GM12878 (cell line): ENCODE measurements at regions of chrX and their contacts with region 1.

Region 1: DNA sequence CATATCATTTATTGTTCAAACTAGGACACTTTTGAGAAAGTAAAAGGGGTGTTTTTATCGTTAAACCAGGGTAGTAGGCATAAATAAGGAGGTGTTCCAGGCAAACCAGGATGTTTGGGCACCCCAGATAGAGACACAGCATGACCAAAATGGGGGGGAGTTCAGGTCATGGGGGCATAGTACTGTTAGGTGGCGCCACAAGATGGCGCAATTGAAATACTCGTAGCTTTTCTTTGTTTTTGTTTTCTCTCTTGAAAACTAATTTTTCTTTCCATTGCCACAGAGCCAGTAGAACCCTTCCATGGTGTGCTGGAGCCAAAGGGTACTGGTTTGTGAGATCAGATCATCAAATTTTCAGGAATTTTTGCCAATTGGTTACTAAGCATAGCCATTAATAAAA is 283.4 kb downstream of the BCOR start:
- DNase-seq: no peak
- ATAC-seq: peak; percentile 62
- H3K4me3 ChIP-seq: no peak overlapping the region
- H3K27ac ChIP-seq: no peak overlapping the region
- H3K4me1 ChIP-seq: peaks cover 18% of the 10 kb centered on the region
- H3K27me3 ChIP-seq: no peaks in the 10 kb centered on the region; a peak in 2 of 4 replicates
- CTCF ChIP-seq: peak; percentile 47 to 64 (median 58); a peak in 5 of 6 replicates
- EP300 ChIP-seq: no peak
- POLR2A ChIP-seq: no peak
- RAD21 ChIP-seq: peak; percentile 65

Region 2: DNA sequence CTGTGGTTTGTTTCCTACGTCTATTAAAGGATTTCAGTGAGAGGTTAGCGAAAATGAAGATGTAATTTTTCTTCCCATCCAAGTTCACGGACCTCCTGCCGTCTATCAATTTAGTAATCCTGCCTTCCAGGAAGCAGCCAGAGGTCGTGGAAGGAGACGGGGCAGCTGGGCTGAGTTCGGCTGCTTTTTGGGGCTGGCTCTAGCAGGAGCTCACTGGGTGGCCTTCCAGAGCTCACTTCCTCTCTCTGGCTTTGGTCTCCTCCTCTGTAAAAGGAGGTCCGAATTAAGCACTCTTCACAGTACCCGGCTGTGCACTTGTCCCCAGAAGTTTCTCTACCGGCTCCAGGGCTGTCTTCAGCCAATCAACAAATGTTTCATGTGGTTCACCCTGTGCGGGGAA is 12.0 kb before region 1 on chrX:
- CTCF ChIA-PET with region 1: no interaction called
- POLR2A ChIA-PET with region 1: no interaction called
- RAD21 ChIA-PET with region 1: no interaction called
- SMC1A ChIA-PET with region 1: no interaction called
- in situ Hi-C with region 1: no loop called
- intact Hi-C with region 1: no loop called
- DNase-seq: no peak
- ATAC-seq: no peak
- H3K4me3 ChIP-seq: no peak overlapping the region
- H3K27ac ChIP-seq: no peak overlapping the region
- H3K4me1 ChIP-seq: no peaks in the 10 kb centered on the region
- H3K27me3 ChIP-seq: no peaks in the 10 kb centered on the region; a peak in 2 of 4 replicates
- CTCF ChIP-seq: no peak
- EP300 ChIP-seq: no peak
- POLR2A ChIP-seq: no peak
- RAD21 ChIP-seq: no peak

Region 3: DNA sequence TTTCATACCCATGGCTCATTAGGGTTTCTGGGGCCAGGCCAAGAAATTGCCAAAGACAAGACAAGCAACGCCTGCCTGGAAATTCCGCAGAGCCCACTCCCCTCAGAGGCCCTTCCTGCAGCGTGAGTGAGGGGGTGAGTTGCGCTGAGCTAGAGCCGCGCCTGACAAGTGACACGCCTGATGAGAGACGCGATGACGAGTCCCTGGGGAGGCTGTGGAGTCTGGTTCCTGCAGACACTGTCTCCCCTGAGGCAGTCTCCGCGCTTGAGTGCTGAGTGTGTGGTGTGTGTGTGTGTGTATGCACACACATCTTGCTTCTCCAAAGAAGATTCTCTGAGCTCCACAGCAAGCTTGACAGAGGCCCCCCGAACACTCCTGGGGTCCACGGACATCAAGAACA is 13.6 kb after region 1 on chrX:
- CTCF ChIA-PET with region 1: interaction called, 8 read pairs
- POLR2A ChIA-PET with region 1: interaction called, 4 read pairs
- RAD21 ChIA-PET with region 1: interaction called, 13 read pairs
- SMC1A ChIA-PET with region 1: interaction called, 7 read pairs
- in situ Hi-C with region 1: no loop called
- intact Hi-C with region 1: no loop called
- DNase-seq: no peak
- ATAC-seq: peak; percentile 90
- H3K4me3 ChIP-seq: no peak overlapping the region
- H3K27ac ChIP-seq: no peak overlapping the region
- H3K4me1 ChIP-seq: no peaks in the 10 kb centered on the region; the same call in 1 of the 2 replicates
- H3K27me3 ChIP-seq: no peaks in the 10 kb centered on the region
- CTCF ChIP-seq: no peak
- EP300 ChIP-seq: no peak
- POLR2A ChIP-seq: no peak
- RAD21 ChIP-seq: no peak

Region 4: DNA sequence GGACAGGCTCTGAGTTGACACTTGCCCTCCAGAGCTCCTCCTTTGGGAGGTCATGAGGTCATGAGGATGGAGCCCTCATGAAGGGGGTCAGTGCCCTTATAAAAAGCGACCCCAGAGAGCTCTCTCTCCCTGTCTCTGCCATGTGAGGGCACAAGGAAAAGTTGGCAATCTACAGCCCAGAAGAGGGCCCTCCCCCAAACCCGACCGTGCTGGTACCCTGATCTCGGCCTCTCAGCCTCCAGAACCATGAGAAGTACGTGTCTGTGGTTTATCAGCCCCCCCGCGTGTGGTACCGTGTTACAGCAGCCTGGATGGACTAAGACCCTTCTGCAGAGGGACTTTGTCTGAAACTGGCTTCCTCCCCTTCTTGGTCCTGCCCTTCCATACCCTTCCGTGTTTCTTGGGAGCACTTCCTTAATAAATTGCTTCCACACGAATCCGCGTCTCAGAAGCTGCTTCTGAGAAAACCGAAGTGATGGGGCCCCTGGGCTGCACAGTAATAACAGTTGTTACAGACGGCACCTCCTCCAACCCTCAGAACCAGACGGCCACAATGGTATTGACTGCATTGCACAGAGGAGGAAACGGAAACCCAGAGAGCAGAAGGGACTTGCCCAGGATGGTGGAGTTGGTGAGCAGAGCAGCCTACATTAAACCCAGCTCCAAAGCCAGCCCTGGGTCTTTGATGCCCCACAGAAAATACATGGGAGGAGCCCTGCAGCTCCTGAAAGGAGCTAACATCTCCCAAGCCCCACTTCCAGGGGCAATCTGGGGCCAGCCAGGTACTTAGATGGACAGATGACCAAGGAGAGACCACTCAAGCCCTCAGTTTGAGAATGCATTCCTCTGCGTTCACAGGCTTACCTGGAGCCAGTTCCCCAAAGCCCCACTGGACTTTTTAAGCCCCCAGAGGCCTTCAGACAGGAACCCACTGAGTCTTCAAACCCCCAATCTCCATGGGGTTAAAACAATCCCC is 40.7 kb after region 1 on chrX:
- CTCF ChIA-PET with region 1: interaction called, 33 read pairs
- POLR2A ChIA-PET with region 1: interaction called, 9 read pairs
- RAD21 ChIA-PET with region 1: interaction called, 25 read pairs
- SMC1A ChIA-PET with region 1: interaction called, 49 read pairs
- in situ Hi-C with region 1: no loop called
- intact Hi-C with region 1: loop called (anchors 2 kb)
- DNase-seq: peak; percentile 82
- ATAC-seq: peak; percentile 88
- H3K4me3 ChIP-seq: peak overlapping the region; percentile 68
- H3K27ac ChIP-seq: peak overlapping the region; percentile 96
- H3K4me1 ChIP-seq: peaks cover 57% of the 10 kb centered on the region
- H3K27me3 ChIP-seq: no peaks in the 10 kb centered on the region
- CTCF ChIP-seq: peak in 2 of 3 experiments; percentile 25 to 27; a peak in 2 of 6 replicates
- EP300 ChIP-seq: peak in 1 of 2 experiments; percentile 44; a peak in 1 of 4 replicates
- POLR2A ChIP-seq: peak; percentile 82
- RAD21 ChIP-seq: peak; percentile 35

Region 5: DNA sequence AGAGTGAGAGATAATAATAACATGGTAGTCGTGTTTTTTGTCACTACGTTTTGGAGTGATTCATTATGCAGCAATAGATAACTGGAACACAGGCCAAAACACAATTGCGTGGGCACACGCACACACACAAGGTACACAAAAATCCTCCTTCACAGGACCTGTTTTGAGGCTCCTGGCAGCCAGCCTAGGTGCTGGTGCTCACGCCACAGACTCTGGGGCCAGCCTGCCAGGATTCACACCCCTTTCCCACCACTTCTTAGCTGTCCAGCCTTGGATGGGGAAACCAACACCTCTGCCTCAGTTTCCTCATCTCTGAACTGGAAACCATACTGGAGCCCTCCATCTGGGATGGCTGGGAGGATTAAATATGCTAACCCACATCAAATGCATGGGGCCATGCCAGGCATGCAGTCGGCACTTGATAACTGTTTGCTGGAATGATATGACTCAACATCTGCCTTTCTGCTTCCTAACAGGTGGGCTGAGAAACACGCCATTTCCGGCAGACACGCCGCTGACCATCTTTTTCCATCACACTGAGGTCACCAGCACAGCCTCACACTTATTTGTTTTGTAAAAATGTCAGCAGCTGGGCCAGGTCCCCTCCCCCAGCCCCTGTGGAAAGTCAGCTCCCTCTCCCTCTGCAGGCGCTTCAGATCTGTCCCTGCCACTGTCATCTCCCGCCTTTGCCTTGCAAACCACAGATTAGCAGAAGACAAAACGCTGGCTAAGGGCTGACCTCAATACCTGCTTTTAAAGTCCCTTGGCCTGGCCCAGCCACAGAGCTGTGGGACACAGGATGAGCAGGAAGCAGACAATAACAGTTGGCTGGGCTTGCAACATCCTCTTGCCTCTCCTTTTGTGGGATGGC is 45.8 kb after region 1 on chrX:
- CTCF ChIA-PET with region 1: interaction called, 33 read pairs
- POLR2A ChIA-PET with region 1: interaction called, 9 read pairs
- RAD21 ChIA-PET with region 1: interaction called, 17 read pairs
- SMC1A ChIA-PET with region 1: interaction called, 49 read pairs
- in situ Hi-C with region 1: no loop called
- intact Hi-C with region 1: loop called (anchors 2 kb)
- DNase-seq: peak; percentile 89
- ATAC-seq: peak; percentile 72
- H3K4me3 ChIP-seq: no peak overlapping the region
- H3K27ac ChIP-seq: peak overlapping the region; percentile 55
- H3K4me1 ChIP-seq: peaks cover 48% of the 10 kb centered on the region
- H3K27me3 ChIP-seq: no peaks in the 10 kb centered on the region
- CTCF ChIP-seq: no peak
- EP300 ChIP-seq: peak; percentile 91 to 98
- POLR2A ChIP-seq: no peak
- RAD21 ChIP-seq: no peak

Region 6: GRCh38 chrX:40013266-40014195 is 199.1 kb after region 1 on chrX:
- CTCF ChIA-PET with region 1: no interaction called
- POLR2A ChIA-PET with region 1: no interaction called
- RAD21 ChIA-PET with region 1: interaction called, 4 read pairs
- SMC1A ChIA-PET with region 1: no interaction called
- in situ Hi-C with region 1: no loop called
- intact Hi-C with region 1: loop called (anchors 10 kb)
- DNase-seq: no peak
- ATAC-seq: peak; percentile 69
- H3K4me3 ChIP-seq: peak overlapping the region; percentile 57; the same call in 1 of the 2 replicates
- H3K27ac ChIP-seq: peak overlapping the region; percentile 42
- H3K4me1 ChIP-seq: peaks cover 5% of the 10 kb centered on the region; the same call in 1 of the 2 replicates
- H3K27me3 ChIP-seq: no peaks in the 10 kb centered on the region
- CTCF ChIP-seq: no peak
- EP300 ChIP-seq: no peak
- POLR2A ChIP-seq: peak; percentile 50; the same call in 1 of the 2 replicates
- RAD21 ChIP-seq: no peak

Region 7: DNA sequence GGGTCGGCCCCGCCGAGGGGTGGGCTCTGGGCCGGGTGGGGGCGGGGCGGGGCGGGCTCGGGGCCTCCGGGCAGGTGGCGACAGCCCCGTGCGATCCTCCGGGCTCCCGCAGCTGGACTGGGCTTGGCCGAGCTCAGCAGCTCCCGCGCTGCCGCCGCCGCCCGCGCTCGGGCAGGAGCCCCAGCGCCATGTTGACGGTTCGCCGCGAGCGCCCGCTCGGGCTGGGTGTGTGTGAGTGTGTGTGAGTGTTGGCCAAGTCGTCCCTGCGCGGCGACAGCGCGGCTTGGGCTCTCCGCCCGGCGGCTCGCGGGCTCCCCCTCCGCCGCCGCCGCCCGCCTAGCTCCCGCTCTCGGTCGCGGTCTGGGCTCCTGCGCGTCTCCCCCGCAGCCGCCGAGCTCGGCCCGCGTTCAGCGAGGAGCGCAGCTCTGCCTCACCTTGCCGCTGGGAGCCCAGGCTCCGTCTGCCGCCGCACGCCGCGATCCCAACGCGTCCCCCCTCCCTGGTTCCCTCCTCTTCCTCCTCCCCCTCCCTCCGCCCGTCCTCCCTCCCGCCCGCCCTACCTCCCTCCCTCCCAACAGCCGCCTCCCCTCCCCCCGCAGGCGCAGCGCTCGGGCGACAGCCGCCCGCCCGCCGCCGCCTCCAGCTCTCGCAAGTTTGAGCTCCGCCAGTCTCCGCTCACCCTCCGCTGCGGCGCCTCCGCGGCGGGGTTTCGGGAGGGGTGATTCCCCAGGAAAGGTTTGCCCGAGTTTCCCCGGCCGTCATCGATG is 283.3 kb after region 1 on chrX and contains the start of gene BCOR:
- CTCF ChIA-PET with region 1: no interaction called
- POLR2A ChIA-PET with region 1: no interaction called
- RAD21 ChIA-PET with region 1: interaction called, 5 read pairs
- SMC1A ChIA-PET with region 1: no interaction called
- in situ Hi-C with region 1: no loop called
- intact Hi-C with region 1: loop called (anchors 2 kb)
- DNase-seq: no peak
- ATAC-seq: peak; percentile 18
- H3K4me3 ChIP-seq: peak within 1 kb of the TSS; percentile 72
- H3K27ac ChIP-seq: peak within 1 kb of the TSS; percentile 74
- H3K4me1 ChIP-seq: peaks cover 4% of the 10 kb centered on the region; the same call in 1 of the 2 replicates
- H3K27me3 ChIP-seq: no peaks in the 10 kb centered on the region
- CTCF ChIP-seq: no peak
- EP300 ChIP-seq: no peak
- POLR2A ChIP-seq: peak; percentile 90
- RAD21 ChIP-seq: no peak
- polyA plus RNA-seq, gene BCOR: 5.1 to 8.0 TPM

Region 8: DNA sequence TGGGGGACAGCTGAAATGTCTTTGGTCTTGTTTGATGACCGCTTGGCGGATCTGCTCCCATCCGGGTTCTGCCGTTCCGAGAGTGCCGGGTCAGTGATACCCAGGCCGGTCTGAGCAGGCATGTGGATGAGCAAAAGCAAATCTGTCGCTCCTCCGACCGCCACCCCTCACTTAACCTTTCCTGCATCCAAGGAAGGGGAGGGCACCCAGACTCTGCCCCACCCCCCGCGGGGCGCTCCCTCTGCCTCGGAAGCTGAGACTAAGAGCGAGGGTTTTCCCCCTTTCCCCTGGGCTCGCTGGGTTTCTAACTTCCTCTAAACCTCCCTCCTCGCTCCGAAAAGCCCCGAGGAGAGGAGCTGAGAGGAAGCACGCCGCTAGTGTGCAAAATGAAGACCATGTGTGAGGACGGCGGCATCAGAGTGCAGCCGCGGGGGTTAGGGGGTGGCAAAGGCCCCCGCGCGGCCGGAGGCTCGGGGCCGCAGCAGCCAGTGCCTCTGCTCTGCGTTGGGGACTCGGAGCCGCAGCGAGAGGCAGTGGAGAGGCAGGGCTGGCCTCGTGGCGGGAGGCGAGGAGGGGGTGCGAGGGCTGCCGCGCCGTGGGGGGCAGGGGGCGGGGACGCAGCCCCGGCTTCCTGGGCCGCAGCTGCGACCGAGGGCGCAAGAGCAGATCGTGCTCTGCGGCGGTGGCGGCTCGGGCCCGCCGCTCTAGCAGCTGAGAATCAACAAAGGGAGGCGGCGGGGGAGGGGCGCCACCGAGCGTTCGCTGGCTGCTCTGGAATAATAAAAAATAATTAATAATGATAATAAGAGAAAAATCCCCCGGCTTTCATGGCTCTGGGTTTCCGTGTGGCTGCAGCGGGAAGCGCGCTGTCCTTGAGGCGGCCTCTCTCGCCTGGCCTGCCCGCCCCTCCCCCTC is 339.2 kb after region 1 on chrX:
- CTCF ChIA-PET with region 1: no interaction called
- POLR2A ChIA-PET with region 1: no interaction called
- RAD21 ChIA-PET with region 1: interaction called, 3 read pairs
- SMC1A ChIA-PET with region 1: no interaction called
- in situ Hi-C with region 1: no loop called
- intact Hi-C with region 1: loop called (anchors 5 kb)
- DNase-seq: no peak
- ATAC-seq: peak; percentile 81
- H3K4me3 ChIP-seq: peak overlapping the region; percentile 39; the same call in 1 of the 2 replicates
- H3K27ac ChIP-seq: no peak overlapping the region
- H3K4me1 ChIP-seq: peaks cover 12% of the 10 kb centered on the region
- H3K27me3 ChIP-seq: no peaks in the 10 kb centered on the region
- CTCF ChIP-seq: no peak; a peak in 1 of 6 replicates
- EP300 ChIP-seq: no peak
- POLR2A ChIP-seq: no peak; the same call in 1 of the 2 replicates
- RAD21 ChIP-seq: peak; percentile 18; the same call in 1 of the 2 replicates